ENCODE measurements at regions of chr17 and their contacts with region 1.

Region 1: DNA sequence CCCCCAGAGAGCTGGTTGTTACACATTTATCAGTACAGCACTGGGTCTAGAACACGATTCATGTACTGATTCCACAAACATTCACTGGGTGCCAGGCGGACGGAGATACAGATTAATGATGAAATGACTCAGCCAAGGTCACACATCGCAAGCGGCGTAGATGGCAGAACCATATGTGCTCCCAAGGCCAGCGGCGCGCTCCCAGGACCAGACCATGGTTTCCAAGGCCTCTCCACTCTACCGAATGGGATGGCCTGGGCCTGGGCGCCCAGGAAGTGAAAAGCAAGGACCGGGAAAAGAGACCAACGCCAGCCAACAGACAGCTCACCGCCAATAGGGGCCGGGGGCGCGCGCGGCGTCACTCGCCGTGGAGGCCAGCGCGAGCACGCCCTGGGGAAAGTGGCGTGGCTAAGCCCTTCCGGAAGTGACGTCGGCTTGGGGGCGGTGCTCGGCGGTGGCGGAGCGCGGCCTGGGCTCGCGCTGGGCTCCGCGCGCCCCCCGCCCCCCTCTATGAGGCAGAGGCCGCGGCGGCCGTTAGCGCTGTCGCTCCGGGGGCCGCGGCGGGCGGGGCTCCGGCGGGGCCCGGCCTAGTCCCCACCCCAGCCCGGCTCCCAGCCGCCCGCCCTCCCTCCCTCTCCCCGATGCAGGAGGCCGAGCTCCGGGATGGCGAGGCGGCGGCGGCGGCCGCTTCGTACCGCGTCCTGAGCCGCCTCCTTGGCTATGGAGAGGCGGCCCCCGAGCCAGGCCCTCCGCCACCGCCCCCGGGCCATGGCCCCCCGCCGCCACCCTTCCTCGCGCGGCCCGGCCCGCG is at the start of gene SOCS7:
- DNase-seq: peak; percentile 96
- ATAC-seq: peak; percentile 96 to 97
- total RNA-seq, gene SOCS7: 11.2 to 11.4 TPM

Region 2: GRCh38 chr17:38322091-38322779 is 29.4 kb before region 1 on chr17:
- intact Hi-C with region 1: no loop called
- DNase-seq: peak; percentile 68
- ATAC-seq: peak; percentile 47 to 70

Region 3: GRCh38 chr17:38415250-38416194 is 63.9 kb after region 1 on chr17:
- intact Hi-C with region 1: loop called (anchors 2 to 5 kb)
- DNase-seq: no peak
- ATAC-seq: peak in 1 of 2 donors; percentile 61

Region 4: GRCh38 chr17:38421171-38421841 is 69.7 kb after region 1 on chr17:
- intact Hi-C with region 1: loop called (anchors 2 to 5 kb)
- DNase-seq: peak; percentile 42
- ATAC-seq: peak; percentile 10 to 35

Measured in left cardiac atrium (tissue), 4 donors.